ENCODE measurements at regions of chr4 and their contacts with region 1.

Region 1: DNA sequence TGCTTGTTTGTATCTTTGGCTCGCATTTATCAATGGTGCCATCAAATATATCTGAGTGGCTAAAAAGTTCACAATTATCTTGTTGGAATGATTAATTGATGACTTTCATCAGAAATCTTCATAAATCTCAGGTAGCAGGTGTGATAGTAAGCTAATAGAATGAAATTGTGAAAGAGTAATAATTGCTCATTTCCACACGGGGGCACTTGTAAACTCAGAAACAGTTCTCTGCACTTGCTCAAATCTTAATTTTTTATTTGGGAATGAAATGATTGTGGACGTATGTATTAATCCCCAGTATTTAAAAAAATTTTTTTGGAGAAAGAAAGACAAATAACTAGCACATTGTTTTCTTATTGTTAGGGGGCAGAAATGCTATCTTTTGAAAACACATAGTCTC is 132.8 kb downstream of the DTHD1 start:
- DNase-seq: no peak
- ATAC-seq: peak; percentile 46; the same call in 1 of the 2 replicates
- H3K4me3 ChIP-seq: no peak overlapping the region
- H3K27ac ChIP-seq: no peak overlapping the region
- H3K4me1 ChIP-seq: no peaks in the 10 kb centered on the region
- H3K27me3 ChIP-seq: no peaks in the 10 kb centered on the region
- CTCF ChIP-seq: peak; percentile 35 to 56 (median 41); a peak in 5 of 6 replicates
- POLR2A ChIP-seq: no peak
- RAD21 ChIP-seq: peak; percentile 68

Region 2: DNA sequence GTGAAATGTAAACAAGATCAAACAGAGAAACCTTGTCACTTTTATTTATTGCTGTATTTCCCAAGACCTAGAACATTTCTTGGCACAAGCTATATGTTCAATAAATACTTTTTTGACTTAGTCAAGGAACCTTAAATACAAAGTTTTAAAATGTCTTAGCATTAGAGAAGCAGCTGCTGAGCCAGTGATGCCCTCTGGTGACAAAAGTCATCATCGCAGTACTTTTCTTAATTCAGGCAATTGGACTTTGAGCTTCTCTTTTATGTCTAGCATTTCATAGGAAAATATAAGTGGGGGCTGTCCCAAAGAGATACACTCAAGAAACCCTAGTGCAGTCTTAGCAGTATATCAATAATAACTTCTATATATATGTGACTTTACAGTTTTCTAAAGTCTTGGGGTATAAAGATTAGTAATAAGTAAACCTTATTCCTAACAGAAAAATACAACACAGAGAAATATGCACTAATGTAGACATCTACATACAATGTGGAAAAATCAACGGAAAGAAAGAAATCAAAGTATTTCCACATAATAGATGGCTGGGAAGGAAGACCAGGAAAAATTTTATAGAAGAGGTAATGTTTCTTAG is 14.4 kb before region 1 on chr4:
- CTCF ChIA-PET with region 1: interaction called, 11 read pairs
- POLR2A ChIA-PET with region 1: no interaction called
- RAD21 ChIA-PET with region 1: no interaction called
- intact Hi-C with region 1: no loop called
- DNase-seq: no peak
- ATAC-seq: peak; percentile 65
- H3K4me3 ChIP-seq: no peak overlapping the region
- H3K27ac ChIP-seq: no peak overlapping the region
- H3K4me1 ChIP-seq: peaks cover under 1 to 9% of the 10 kb centered on the region in 2 experiments; a peak in 1 of 4 replicates
- H3K27me3 ChIP-seq: no peaks in the 10 kb centered on the region
- CTCF ChIP-seq: peak; percentile 61 to 86 (median 66); a peak in 5 of 6 replicates
- POLR2A ChIP-seq: no peak
- RAD21 ChIP-seq: peak; percentile 77

Region 3: GRCh38 chr4:37383579-37384229 is 969.5 kb after region 1 on chr4:
- CTCF ChIA-PET with region 1: interaction called, 14 read pairs
- POLR2A ChIA-PET with region 1: no interaction called
- RAD21 ChIA-PET with region 1: no interaction called
- intact Hi-C with region 1: loop called (anchors 2 kb)
- DNase-seq: peak; percentile 36
- ATAC-seq: peak; percentile 85
- H3K4me3 ChIP-seq: no peak overlapping the region
- H3K27ac ChIP-seq: no peak overlapping the region
- H3K4me1 ChIP-seq: no peaks in the 10 kb centered on the region
- H3K27me3 ChIP-seq: no peaks in the 10 kb centered on the region
- CTCF ChIP-seq: peak; percentile 66 to 78 (median 70)
- POLR2A ChIP-seq: no peak
- RAD21 ChIP-seq: peak; percentile 68

Region 4: DNA sequence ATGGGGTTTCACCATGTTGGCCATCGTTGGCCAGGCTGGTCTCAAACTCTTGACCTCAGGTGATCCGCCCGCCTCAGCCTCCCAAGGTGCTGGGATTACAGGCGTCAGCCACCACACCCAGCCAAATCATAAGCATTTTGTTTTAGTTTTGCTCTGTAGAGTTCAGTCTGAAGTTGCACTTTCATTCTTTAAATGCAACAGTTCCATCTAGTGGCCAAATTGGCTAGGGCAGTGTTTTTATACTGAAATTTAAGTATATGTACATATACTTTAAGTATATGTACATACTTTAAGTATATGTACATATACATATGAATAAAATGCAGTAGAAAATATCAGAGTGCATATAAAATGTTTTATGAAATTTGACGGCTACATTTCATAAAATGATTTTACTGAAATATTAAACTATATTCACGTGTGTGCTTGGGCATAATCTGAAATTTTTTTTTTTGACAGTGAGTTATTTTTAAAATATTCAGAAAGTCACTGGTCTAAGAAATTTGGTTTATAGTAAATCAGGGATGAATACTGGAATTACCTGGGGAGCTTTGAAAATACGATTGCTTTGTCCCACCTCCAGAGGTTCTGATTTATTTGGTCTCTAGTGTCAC is 975.8 kb after region 1 on chr4:
- CTCF ChIA-PET with region 1: interaction called, 14 read pairs
- POLR2A ChIA-PET with region 1: no interaction called
- RAD21 ChIA-PET with region 1: no interaction called
- intact Hi-C with region 1: loop called (anchors 1 kb)
- DNase-seq: peak; percentile 48
- ATAC-seq: peak; percentile 80
- H3K4me3 ChIP-seq: no peak overlapping the region
- H3K27ac ChIP-seq: no peak overlapping the region
- H3K4me1 ChIP-seq: peaks cover 0 to 14% of the 10 kb centered on the region in 2 experiments; a peak in 2 of 4 replicates
- H3K27me3 ChIP-seq: no peaks in the 10 kb centered on the region
- CTCF ChIP-seq: peak; percentile 45 to 69 (median 60); a peak in 5 of 6 replicates
- POLR2A ChIP-seq: no peak
- RAD21 ChIP-seq: peak; percentile 81

Measured in HCT116 (cell line).